ENCODE measurements at regions of chr1 and their contacts with region 1.

Region 1: GRCh38 chr1:159015440-159015909 is 5.8 kb downstream of the IFI16 start:
- DNase-seq: peak; percentile 82
- H3K4me3 ChIP-seq: no peak overlapping the region
- H3K27ac ChIP-seq: peak overlapping the region; percentile 19
- H3K4me1 ChIP-seq: peaks cover 13% of the 10 kb centered on the region
- H3K27me3 ChIP-seq: no peaks in the 10 kb centered on the region
- CTCF ChIP-seq: no peak

Region 2: GRCh38 chr1:159055181-159055641 is 39.7 kb after region 1 on chr1:
- CTCF ChIA-PET with region 1: no interaction called
- dilution Hi-C with region 1: no loop called
- in situ Hi-C with region 1: no loop called
- intact Hi-C with region 1: loop called (anchors 2 kb)
- DNase-seq: peak; percentile 42
- H3K4me3 ChIP-seq: no peak overlapping the region
- H3K27ac ChIP-seq: no peak overlapping the region
- H3K4me1 ChIP-seq: peaks cover 19% of the 10 kb centered on the region
- H3K27me3 ChIP-seq: no peaks in the 10 kb centered on the region
- CTCF ChIP-seq: no peak